Calu3 (cell line): ENCODE measurements at regions of chr17 and their contacts with region 1.

Region 1: DNA sequence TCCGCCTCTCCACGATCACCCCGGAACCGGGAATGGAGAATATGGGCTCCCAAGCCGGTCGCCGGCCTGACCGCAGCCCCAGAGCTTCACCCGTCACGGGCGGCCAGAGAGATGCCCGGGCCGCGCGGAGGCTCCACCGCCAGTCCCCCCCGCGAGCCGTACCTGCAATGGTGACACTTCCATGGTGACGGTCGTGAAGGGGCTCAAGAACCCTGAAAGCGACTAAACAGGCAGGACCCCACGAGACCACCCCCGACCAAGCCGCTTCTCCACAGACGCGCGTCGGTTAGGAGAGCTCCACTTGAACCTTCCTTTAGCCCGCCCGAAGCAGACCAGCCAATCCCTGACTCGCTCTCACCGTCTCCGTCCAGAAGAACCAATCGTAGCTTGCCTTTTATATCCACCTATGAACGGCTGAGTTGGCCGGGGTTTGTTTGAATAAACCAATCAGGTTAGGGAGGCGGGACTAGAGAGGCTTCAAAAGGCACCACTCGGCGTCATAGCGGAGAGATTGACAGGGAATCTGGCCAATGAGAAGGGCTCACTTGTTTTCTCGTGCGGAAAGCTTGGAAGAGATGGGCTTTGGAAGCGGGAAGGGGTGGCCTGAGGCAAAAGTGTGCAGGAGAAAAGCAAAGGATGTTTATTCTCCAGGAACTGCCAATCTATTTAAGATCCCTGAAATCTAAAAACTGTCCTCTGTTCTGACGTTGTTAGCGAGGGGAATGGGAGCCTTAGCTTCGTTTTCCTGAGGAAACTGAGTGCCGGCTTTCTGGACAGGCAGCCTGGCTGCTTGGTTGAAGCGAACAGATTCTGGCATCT is at the start of gene TOP2A:
- DNase-seq: peak; percentile 100
- H3K4me3 Mint-ChIP-seq: peak within 1 kb of the TSS; percentile 96
- H3K27ac Mint-ChIP-seq: peak within 1 kb of the TSS; percentile 94
- H3K4me1 Mint-ChIP-seq: peaks cover 42% of the 10 kb centered on the region
- H3K27me3 Mint-ChIP-seq: no peaks in the 10 kb centered on the region
- CTCF ChIP-seq: no peak
- total RNA-seq, gene TOP2A: 1,389 and 1,672 TPM in 2 replicates

Region 2: GRCh38 chr17:39777534-39778365 is 640.1 kb before region 1 on chr17:
- CTCF ChIA-PET with region 1: interaction called, 26 read pairs
- intact Hi-C with region 1: loop called (anchors 1 kb)
- DNase-seq: no peak
- H3K4me3 Mint-ChIP-seq: no peak overlapping the region
- H3K27ac Mint-ChIP-seq: no peak overlapping the region
- H3K4me1 Mint-ChIP-seq: peaks cover 48% of the 10 kb centered on the region
- H3K27me3 Mint-ChIP-seq: no peaks in the 10 kb centered on the region
- CTCF ChIP-seq: no peak

Region 3: GRCh38 chr17:39952680-39953470 is 464.9 kb before region 1 on chr17:
- CTCF ChIA-PET with region 1: interaction called, 49 read pairs
- intact Hi-C with region 1: no loop called
- DNase-seq: peak; percentile 100
- H3K4me3 Mint-ChIP-seq: peak overlapping the region; percentile 58
- H3K27ac Mint-ChIP-seq: peak overlapping the region; percentile 18
- H3K4me1 Mint-ChIP-seq: peaks cover 42% of the 10 kb centered on the region
- H3K27me3 Mint-ChIP-seq: peaks cover 15% of the 10 kb centered on the region
- CTCF ChIP-seq: no peak

Region 4: GRCh38 chr17:40287494-40288369 is 130.1 kb before region 1 on chr17 and contains the start of gene CDC6:
- CTCF ChIA-PET with region 1: interaction called, 16 read pairs
- intact Hi-C with region 1: no loop called
- DNase-seq: peak; percentile 100
- H3K4me3 Mint-ChIP-seq: peak within 1 kb of the TSS; percentile 83
- H3K27ac Mint-ChIP-seq: peak within 1 kb of the TSS; percentile 90
- H3K4me1 Mint-ChIP-seq: peaks cover 71% of the 10 kb centered on the region
- H3K27me3 Mint-ChIP-seq: no peaks in the 10 kb centered on the region
- CTCF ChIP-seq: no peak
- total RNA-seq, gene CDC6: 567 and 645 TPM in 2 replicates

Region 5: GRCh38 chr17:40378966-40379365 is 38.9 kb before region 1 on chr17:
- CTCF ChIA-PET with region 1: interaction called, 23 read pairs
- intact Hi-C with region 1: no loop called
- DNase-seq: no peak
- H3K4me3 Mint-ChIP-seq: no peak overlapping the region
- H3K27ac Mint-ChIP-seq: no peak overlapping the region
- H3K4me1 Mint-ChIP-seq: no peaks in the 10 kb centered on the region
- H3K27me3 Mint-ChIP-seq: no peaks in the 10 kb centered on the region
- CTCF ChIP-seq: no peak

Region 6: GRCh38 chr17:40480501-40481003 is 62.7 kb after region 1 on chr17:
- CTCF ChIA-PET with region 1: interaction called, 227 read pairs
- intact Hi-C with region 1: loop called (anchors 1 kb)
- DNase-seq: peak; percentile 91
- H3K4me3 Mint-ChIP-seq: no peak overlapping the region
- H3K27ac Mint-ChIP-seq: no peak overlapping the region
- H3K4me1 Mint-ChIP-seq: peaks cover 25% of the 10 kb centered on the region
- H3K27me3 Mint-ChIP-seq: peaks cover 36% of the 10 kb centered on the region
- CTCF ChIP-seq: no peak

Region 7: GRCh38 chr17:40551879-40552768 is 134.3 kb after region 1 on chr17:
- CTCF ChIA-PET with region 1: interaction called, 17 read pairs
- intact Hi-C with region 1: no loop called
- DNase-seq: no peak
- H3K4me3 Mint-ChIP-seq: no peak overlapping the region
- H3K27ac Mint-ChIP-seq: no peak overlapping the region
- H3K4me1 Mint-ChIP-seq: peaks cover 20% of the 10 kb centered on the region
- H3K27me3 Mint-ChIP-seq: peaks cover 60% of the 10 kb centered on the region
- CTCF ChIP-seq: no peak